SK-N-SH (cell line): ENCODE measurements at regions of chr11 and their contacts with region 1.

Region 1: GRCh38 chr11:116427903-116428637 is 344.7 kb downstream of the BUD13 start:
- DNase-seq: peak; percentile 88
- H3K4me3 ChIP-seq: no peak overlapping the region; a peak in 1 of 4 replicates
- H3K27ac ChIP-seq: peak overlapping the region; percentile 32 to 100; a peak in 3 of 4 replicates
- H3K4me1 ChIP-seq: peaks cover 5 to 63% of the 10 kb centered on the region in 2 experiments; a peak in 3 of 4 replicates
- H3K27me3 ChIP-seq: no peaks in the 10 kb centered on the region
- CTCF ChIP-seq: no peak
- EP300 ChIP-seq: peak; percentile 27 to 97; a peak in 3 of 4 replicates
- RAD21 ChIP-seq: peak; percentile 50

Region 2: DNA sequence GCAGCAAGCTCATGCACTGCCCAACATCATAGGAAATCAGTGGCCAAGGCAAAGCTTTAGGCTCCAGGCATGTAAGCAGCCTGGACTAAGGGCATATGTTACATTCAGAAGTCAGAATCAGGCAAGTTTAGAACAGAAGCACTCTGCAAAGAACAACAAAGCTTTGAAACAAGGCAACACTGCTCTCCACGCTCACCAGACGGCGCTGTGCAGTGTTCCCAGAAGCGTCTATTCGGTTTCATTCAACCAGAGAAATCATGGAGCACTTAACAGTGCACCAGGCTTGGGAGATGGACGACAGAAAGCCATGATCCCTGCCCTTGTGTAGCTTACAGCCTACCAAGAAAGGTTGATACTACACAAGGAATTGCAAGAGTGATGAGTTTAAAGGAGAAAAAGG is 211.1 kb before region 1 on chr11:
- CTCF ChIA-PET with region 1: interaction called, 6 read pairs
- POLR2A ChIA-PET with region 1: interaction called, 17 read pairs
- DNase-seq: no peak
- H3K4me3 ChIP-seq: no peak overlapping the region
- H3K27ac ChIP-seq: peak overlapping the region in 1 of 2 experiments; percentile 64; a peak in 1 of 4 replicates
- H3K4me1 ChIP-seq: peaks cover 0 to 25% of the 10 kb centered on the region in 2 experiments; a peak in 1 of 4 replicates
- H3K27me3 ChIP-seq: no peaks in the 10 kb centered on the region
- CTCF ChIP-seq: peak; percentile 68
- EP300 ChIP-seq: no peak
- RAD21 ChIP-seq: peak; percentile 62

Region 3: DNA sequence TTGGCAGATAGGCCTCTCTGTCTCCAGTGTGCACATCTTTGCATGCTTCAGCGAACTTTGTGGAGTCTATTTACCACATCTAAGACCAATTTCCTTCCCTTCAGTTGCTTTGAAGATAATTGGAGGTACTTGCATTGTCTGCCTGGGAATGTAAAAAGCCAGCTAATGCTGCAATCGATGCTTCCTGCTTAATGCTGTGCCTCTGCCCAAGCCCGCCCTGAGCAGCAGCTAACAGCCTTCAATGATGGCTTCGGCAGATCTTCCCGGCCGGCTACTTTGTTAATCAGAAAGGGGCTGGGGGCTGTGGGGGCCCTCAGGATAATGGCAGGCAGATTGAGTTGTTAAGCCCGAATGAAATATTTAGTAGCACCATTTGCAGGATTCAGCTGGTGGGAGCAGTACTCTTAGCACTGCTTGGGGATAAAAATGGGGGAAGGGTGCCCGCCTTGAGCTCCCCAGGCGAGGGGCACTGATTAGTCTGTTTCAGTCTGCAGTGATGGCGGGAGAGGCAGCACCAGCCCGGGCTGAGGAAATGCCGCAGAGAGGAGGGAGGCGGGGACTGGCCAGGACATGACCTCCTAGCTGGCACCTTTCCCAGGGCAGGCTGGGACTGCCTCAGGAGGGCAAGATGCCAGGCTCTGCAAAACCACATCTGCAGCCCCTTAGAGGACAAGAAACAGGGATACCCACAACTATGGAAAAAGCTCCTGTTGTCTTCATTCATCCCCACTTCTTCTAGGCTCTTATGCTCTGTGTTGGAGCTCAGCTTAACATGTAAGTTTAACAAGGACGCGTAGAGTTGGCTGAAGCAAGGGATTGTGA is 115.3 kb before region 1 on chr11:
- CTCF ChIA-PET with region 1: no interaction called
- POLR2A ChIA-PET with region 1: interaction called, 23 read pairs
- DNase-seq: peak; percentile 88
- H3K4me3 ChIP-seq: peak overlapping the region in 1 of 2 experiments; percentile 38; a peak in 3 of 4 replicates
- H3K27ac ChIP-seq: peak overlapping the region; percentile 65 to 100
- H3K4me1 ChIP-seq: peaks cover 27 to 42% of the 10 kb centered on the region in 2 experiments
- H3K27me3 ChIP-seq: no peaks in the 10 kb centered on the region
- CTCF ChIP-seq: no peak
- EP300 ChIP-seq: peak; percentile 65 to 73; a peak in 3 of 4 replicates
- RAD21 ChIP-seq: no peak; the same call in none of the 2 replicates

Region 4: DNA sequence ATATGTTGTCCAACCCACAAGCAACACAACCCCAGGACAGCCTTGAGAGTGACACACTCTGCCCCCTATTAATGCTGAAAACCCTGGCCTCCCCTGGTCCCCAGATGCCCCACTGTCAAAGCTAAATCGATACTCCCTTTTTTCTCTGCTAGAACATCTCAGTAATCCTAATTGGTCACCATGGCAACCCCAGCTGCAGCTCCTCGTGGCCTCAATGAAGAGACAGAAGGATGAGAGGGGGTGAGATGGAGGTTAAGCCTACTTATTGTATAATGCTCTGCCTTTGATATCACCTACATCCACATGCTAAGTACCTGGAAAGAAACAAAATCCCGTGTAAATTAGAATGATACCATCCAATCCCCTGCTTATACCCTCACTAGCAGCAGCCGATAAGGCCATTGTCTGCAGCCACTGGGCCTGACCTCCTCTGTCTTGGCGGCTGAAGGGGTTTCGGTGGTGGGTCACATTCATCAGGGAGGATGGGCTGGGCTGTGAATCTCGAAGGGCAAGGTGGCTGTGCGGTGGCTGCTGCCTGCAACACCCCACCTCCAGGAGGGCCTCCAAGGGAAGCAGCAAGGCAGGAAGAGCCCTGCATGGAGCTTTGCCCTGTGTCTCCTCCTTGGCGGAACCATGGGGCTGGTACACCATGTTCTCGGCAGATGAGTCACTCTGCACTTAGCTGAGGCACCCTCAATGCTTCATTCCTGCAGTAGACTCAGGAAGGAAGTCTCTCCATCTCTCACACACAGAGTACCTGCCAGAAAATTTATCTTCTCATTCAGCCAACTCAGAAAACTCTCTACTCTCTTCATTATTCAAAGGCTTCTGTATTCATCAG is 54.7 kb before region 1 on chr11:
- CTCF ChIA-PET with region 1: interaction called, 3 read pairs
- POLR2A ChIA-PET with region 1: interaction called, 10 read pairs
- DNase-seq: no peak
- H3K4me3 ChIP-seq: no peak overlapping the region
- H3K27ac ChIP-seq: peak overlapping the region in 1 of 2 experiments; percentile 97; a peak in 2 of 4 replicates
- H3K4me1 ChIP-seq: peaks cover 0 to 47% of the 10 kb centered on the region in 2 experiments; a peak in 2 of 4 replicates
- H3K27me3 ChIP-seq: no peaks in the 10 kb centered on the region
- CTCF ChIP-seq: no peak
- EP300 ChIP-seq: no peak
- RAD21 ChIP-seq: no peak

Region 5: GRCh38 chr11:116454020-116454645 is 26.1 kb after region 1 on chr11:
- CTCF ChIA-PET with region 1: interaction called, 6 read pairs
- POLR2A ChIA-PET with region 1: interaction called, 36 read pairs
- DNase-seq: peak; percentile 37
- H3K4me3 ChIP-seq: no peak overlapping the region
- H3K27ac ChIP-seq: peak overlapping the region in 1 of 2 experiments; percentile 99; a peak in 2 of 4 replicates
- H3K4me1 ChIP-seq: peaks cover 0 to 46% of the 10 kb centered on the region in 2 experiments; a peak in 1 of 4 replicates
- H3K27me3 ChIP-seq: no peaks in the 10 kb centered on the region
- CTCF ChIP-seq: peak; percentile 62
- EP300 ChIP-seq: no peak
- RAD21 ChIP-seq: peak; percentile 80

Region 6: GRCh38 chr11:116471608-116472256 is 43.7 kb after region 1 on chr11:
- CTCF ChIA-PET with region 1: interaction called, 11 read pairs
- POLR2A ChIA-PET with region 1: interaction called, 16 read pairs
- DNase-seq: no peak
- H3K4me3 ChIP-seq: no peak overlapping the region
- H3K27ac ChIP-seq: peak overlapping the region in 1 of 2 experiments; percentile 94; a peak in 1 of 4 replicates
- H3K4me1 ChIP-seq: peaks cover 0 to 32% of the 10 kb centered on the region in 2 experiments; a peak in 2 of 4 replicates
- H3K27me3 ChIP-seq: no peaks in the 10 kb centered on the region
- CTCF ChIP-seq: no peak
- EP300 ChIP-seq: no peak
- RAD21 ChIP-seq: no peak

Region 7: GRCh38 chr11:116678887-116679286 is 250.8 kb after region 1 on chr11:
- CTCF ChIA-PET with region 1: no interaction called
- POLR2A ChIA-PET with region 1: no interaction called
- DNase-seq: no peak
- H3K4me3 ChIP-seq: no peak overlapping the region
- H3K27ac ChIP-seq: no peak overlapping the region
- H3K4me1 ChIP-seq: no peaks in the 10 kb centered on the region
- H3K27me3 ChIP-seq: no peaks in the 10 kb centered on the region
- CTCF ChIP-seq: no peak
- EP300 ChIP-seq: no peak
- RAD21 ChIP-seq: no peak